SK-N-SH (cell line): ENCODE measurements at regions of chr14 and their contacts with region 1.

Region 1: DNA sequence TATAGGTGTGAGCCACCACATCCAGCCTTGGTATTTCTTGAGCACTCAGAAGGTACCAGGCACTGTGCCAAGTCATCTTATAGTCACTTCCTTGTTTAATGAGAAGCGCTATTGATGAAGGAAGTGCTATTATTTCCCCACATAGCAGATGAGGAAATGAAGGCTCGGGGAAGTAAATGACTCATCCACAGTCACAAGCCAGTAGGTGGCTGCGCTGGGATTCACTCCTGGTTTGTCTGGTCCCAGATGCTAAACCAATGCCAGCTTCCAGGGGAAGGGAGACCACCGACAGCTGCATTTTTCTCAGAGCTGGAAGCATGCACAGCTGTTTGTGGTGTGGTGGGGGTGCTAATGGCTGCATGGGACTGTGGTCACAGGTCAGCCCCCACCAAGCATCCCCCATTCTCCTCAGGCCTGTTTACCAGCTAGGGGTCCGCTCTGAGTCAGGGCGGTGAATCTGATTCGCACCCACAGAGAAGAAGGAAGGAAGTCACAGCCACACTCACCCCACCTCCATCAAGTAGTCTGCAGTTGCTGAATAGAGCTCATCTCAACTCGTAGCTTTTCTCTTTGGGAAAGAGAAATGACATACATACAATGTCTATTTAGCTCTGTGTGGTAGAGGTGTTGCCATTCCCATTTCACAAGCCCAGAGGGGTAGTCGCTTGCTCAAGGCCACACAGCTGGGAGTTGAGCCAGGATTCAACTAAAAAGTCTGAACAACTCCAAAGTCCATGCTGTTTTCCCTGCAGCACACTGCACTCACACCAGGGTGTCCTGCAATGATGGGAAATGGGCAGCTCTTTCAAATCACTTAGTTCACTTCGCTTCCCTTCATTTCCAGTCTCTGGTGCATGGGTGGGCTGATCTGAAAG is 6.3 kb upstream of the LTBP2 start:
- DNase-seq: no peak
- H3K4me3 ChIP-seq: 0 out of 4 replicates have a peak overlapping the region, but pooled peaks of 1 of the 2 experiments have one; percentile 10
- H3K27ac ChIP-seq: peak overlapping the region; percentile 72 to 99
- H3K4me1 ChIP-seq: peaks cover 19 to 63% of the 10 kb centered on the region in 2 experiments; a peak in 3 of 4 replicates
- H3K27me3 ChIP-seq: no peaks in the 10 kb centered on the region
- CTCF ChIP-seq: no peak
- EP300 ChIP-seq: peak in 1 of 2 experiments; percentile 17; a peak in 1 of 4 replicates
- RAD21 ChIP-seq: no peak

Region 2: DNA sequence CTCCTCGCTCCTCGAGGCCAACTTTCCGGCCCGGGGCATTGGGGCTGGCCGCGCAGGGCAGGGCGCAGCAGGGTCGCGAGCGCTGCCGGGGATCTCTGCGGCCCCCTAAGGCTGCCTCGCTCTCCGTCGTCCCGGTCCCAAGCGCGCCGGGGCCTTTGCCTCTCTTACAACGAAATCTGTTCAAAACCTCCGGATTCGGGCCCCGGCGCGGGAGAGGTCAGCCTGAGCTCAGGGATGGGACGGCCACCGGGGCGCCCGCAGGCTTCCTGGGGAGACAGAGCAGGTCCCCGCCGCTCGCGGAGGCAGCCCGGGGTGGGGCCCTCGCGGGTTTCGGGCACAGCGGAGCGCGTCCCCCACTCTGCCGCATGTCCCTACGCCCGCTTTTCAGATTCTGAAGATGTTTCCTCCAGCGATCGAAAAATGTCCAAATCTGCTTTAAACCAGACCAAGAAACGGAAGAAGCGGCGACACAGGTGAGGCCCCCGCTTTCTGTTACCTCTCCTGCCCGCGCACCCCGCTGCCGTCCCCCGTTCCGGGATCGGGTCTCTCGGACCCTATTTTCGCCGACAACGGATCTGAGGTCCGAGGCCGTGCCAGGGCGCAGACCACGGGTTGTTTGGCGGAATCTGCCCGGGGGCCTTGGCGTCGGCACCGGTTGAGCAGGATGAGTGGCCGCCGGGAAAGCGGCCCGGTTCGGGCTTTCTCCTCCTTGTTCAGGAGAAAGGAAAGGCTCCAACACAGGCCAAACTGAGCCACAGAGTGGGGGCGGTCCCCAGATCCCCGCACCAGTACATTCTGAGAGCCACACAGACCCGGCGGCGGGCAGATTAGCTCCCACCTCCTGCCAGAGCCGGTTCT is 377.3 kb before region 1 on chr14:
- CTCF ChIA-PET with region 1: no interaction called
- POLR2A ChIA-PET with region 1: no interaction called
- DNase-seq: peak; percentile 71
- H3K4me3 ChIP-seq: no peak overlapping the region
- H3K27ac ChIP-seq: no peak overlapping the region
- H3K4me1 ChIP-seq: no peaks in the 10 kb centered on the region; a peak in 1 of 4 replicates
- H3K27me3 ChIP-seq: peaks cover 91% of the 10 kb centered on the region
- CTCF ChIP-seq: no peak
- EP300 ChIP-seq: no peak
- RAD21 ChIP-seq: no peak

Region 3: GRCh38 chr14:74577247-74577947 is 40.9 kb before region 1 on chr14:
- CTCF ChIA-PET with region 1: no interaction called
- POLR2A ChIA-PET with region 1: no interaction called
- DNase-seq: no peak
- H3K4me3 ChIP-seq: no peak overlapping the region
- H3K27ac ChIP-seq: peak overlapping the region; percentile 86 to 97
- H3K4me1 ChIP-seq: peaks cover 44 to 72% of the 10 kb centered on the region in 2 experiments
- H3K27me3 ChIP-seq: no peaks in the 10 kb centered on the region
- CTCF ChIP-seq: no peak
- EP300 ChIP-seq: no peak
- RAD21 ChIP-seq: no peak

Region 4: DNA sequence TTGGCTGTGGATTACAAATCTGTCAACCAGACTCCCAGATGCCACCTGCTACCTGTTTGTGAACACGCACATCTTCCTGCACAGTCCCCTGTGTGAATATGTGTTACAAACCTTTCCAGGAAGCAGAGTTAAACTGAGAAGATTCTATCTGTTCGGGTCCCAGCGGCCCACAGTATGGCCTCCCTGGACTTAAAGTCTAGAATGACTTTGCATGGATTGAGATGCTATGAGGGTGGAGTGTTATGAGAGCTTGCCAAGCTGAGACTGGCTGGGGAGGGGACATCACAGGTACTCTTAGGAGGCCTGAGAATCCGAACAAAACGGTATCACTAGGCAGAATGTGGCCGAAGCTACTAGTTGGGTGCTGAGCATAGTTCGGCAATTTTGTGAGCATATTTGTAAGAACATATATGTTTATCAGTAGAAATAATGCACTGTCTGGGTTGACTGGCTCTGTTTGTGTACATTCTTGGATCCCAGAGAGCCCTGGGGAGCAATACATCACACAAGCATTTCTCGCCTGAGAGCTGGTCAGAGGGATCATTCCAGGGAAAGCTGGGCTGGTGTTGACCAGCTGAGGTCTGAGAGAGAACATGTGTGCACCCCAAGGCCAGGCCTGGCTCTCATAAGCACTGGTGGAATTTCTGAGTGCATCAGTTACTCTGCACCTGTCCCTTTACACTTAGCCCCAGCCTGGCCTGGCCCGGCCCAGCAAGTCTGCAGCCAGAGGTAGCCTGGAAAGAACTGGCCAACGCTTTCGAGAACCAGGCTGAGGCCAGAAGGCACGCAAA is 23.5 kb after region 1 on chr14:
- CTCF ChIA-PET with region 1: interaction called, 64 read pairs
- POLR2A ChIA-PET with region 1: no interaction called
- DNase-seq: no peak
- H3K4me3 ChIP-seq: no peak overlapping the region
- H3K27ac ChIP-seq: no peak overlapping the region
- H3K4me1 ChIP-seq: peaks cover 0 to 20% of the 10 kb centered on the region in 2 experiments; a peak in 2 of 4 replicates
- H3K27me3 ChIP-seq: no peaks in the 10 kb centered on the region
- CTCF ChIP-seq: no peak
- EP300 ChIP-seq: no peak
- RAD21 ChIP-seq: no peak

Region 5: DNA sequence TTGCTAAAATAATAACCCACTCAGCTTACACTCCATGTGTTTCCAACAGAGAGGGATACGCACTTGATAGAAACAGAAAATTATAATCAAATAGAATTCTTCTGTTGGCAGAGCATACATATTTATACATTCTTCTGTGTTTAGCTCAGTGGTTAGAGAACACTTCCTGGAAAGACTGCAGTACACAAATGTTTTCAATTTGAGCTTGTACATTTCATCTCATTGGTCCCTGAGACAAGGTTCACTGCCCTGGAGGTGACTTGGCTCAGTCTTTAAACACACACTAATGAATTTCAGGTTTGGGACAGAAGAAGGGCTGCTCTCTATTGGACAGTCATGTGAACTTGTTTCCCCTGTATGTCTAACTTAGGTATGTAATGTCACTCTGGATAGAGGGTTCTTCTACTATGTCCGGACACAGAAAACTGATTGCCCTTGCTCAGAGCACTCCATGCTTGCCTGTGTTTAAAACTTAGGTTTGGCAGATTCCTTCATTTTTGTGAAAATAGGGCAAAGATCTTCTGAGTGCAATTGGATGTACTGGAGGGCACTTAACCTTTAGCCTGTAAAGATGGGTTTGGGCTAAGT is 234.7 kb after region 1 on chr14:
- CTCF ChIA-PET with region 1: no interaction called
- POLR2A ChIA-PET with region 1: no interaction called
- DNase-seq: no peak
- H3K4me3 ChIP-seq: no peak overlapping the region
- H3K27ac ChIP-seq: peak overlapping the region; percentile 69 to 90; a peak in 3 of 4 replicates
- H3K4me1 ChIP-seq: peaks cover 1 to 32% of the 10 kb centered on the region in 2 experiments; a peak in 3 of 4 replicates
- H3K27me3 ChIP-seq: no peaks in the 10 kb centered on the region
- CTCF ChIP-seq: 0 out of 2 replicates have a peak, but pooled peaks have one; percentile 7
- EP300 ChIP-seq: peak; percentile 46 to 63; a peak in 3 of 4 replicates
- RAD21 ChIP-seq: no peak

Region 6: DNA sequence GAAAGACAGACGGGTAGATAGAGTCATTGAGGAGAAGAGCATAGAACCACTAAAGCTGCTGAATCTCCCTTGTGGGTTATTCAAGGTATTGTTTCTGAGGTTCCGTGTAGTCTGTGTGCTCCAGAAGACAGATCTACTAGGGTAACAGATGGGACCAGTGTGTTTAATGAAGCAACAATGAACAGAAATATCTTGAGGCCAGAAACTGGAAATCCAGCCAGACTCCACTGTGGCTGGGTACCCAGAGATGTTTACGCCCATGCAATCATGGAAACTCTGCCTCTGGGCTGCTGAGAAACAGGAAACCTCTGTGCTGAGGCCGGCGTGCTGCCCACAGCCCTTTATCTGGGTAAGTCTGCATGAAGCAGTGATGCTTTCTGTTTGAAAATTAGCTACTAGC is 249.4 kb after region 1 on chr14:
- CTCF ChIA-PET with region 1: no interaction called
- POLR2A ChIA-PET with region 1: no interaction called
- DNase-seq: peak; percentile 61
- H3K4me3 ChIP-seq: no peak overlapping the region
- H3K27ac ChIP-seq: peak overlapping the region in 1 of 2 experiments; percentile 66; a peak in 2 of 4 replicates
- H3K4me1 ChIP-seq: peaks cover 0 to 4% of the 10 kb centered on the region in 2 experiments; a peak in 1 of 4 replicates
- H3K27me3 ChIP-seq: no peaks in the 10 kb centered on the region
- CTCF ChIP-seq: no peak
- EP300 ChIP-seq: no peak
- RAD21 ChIP-seq: no peak